Dendritic cell treated with granulocyte-macrophage colony-stimulating factor and Interleukin-4, amounts not matched to agents 40 ng/mL and 50 ng/mL, for 4 days (primary cell): ENCODE measurements at regions of chr15 and their contacts with region 1.

Region 1: DNA sequence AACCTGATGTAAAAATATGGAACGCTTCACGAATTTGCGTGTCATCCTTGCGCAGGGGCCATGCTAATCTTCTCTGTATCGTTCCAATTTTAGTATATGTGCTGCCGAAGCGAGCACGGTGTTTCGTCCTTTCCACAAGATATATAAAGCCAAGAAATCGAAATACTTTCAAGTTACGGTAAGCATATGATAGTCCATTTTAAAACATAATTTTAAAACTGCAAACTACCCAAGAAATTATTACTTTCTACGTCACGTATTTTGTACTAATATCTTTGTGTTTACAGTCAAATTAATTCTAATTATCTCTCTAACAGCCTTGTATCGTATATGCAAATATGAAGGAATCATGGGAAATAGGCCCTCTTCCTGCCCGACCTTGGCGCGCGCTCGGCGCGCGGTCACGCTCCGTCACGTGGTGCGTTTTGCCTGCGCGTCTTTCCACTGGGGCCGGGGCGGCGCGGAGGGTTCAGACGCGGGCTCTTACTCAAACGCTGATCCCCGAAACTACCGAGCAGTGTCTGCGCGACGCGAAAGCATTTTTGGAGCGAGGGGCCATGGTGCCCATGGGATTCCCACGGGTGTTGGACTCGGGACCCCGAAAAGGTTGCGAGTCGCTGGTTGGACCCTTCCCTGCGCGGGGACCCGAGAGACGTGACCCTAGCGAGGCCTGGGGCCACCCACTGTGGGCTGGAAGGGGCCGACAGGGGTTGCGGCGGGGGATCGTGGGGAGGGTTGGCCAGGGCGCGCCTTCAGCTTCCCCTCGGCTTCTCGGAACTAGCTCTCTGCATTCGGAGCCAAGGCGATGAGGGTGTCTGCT is at the start of gene RNU6-1:
- H3K4me3 Mint-ChIP-seq: peak within 1 kb of the TSS; percentile 75
- H3K27ac Mint-ChIP-seq: peak within 1 kb of the TSS; percentile 83
- H3K4me1 Mint-ChIP-seq: peaks cover 49% of the 10 kb centered on the region
- H3K27me3 Mint-ChIP-seq: peaks cover 17% of the 10 kb centered on the region

Region 2: GRCh38 chr15:67322481-67322880 is 517.7 kb before region 1 on chr15:
- intact Hi-C with region 1: no loop called
- H3K4me3 Mint-ChIP-seq: no peak overlapping the region
- H3K27ac Mint-ChIP-seq: no peak overlapping the region
- H3K4me1 Mint-ChIP-seq: no peaks in the 10 kb centered on the region
- H3K27me3 Mint-ChIP-seq: peaks cover 1% of the 10 kb centered on the region

Region 3: GRCh38 chr15:67383899-67384298 is 456.2 kb before region 1 on chr15:
- intact Hi-C with region 1: loop called (anchors 10 kb)
- H3K4me3 Mint-ChIP-seq: no peak overlapping the region
- H3K27ac Mint-ChIP-seq: no peak overlapping the region
- H3K4me1 Mint-ChIP-seq: no peaks in the 10 kb centered on the region
- H3K27me3 Mint-ChIP-seq: peaks cover 2% of the 10 kb centered on the region

Region 4: DNA sequence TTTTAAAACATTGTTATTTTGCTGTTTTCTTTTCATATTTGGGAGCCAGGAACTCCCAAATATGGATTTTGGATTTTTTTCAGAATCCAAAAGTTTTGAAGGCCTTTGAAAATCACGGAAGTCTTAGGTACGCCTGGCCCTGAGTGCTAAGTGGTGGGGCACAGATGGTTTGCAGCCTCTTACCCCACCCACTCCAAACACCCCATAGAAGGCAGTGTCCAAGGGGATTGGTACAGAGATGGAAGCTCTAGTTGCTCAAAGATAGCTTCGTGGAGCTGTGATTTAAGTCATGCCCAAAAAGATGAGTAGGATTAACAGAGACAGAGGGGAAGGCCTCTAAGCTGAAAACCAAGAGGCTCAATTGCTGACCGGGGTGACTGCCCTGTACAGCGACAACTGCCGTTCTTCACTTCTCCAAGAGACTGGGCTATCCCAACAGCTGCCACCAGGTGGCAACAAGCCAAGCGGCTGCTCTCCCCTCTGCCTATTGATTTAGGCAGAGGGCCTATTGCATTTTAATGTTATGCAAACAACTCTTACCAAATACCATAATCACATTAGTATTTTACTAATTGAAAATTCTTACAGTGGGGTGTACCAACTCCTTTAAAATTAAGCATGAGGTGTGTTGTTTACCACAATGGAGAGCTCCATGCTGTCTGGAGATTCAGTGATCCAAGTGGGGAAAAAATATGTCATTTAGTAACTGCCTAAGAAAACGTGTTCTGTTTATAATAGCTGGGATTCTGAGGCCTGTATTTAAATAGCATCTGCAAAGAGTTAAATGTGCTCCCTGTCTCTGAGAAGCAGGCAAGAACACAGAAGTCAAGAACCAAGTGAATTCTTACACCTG is 383.2 kb before region 1 on chr15:
- intact Hi-C with region 1: loop called (anchors 1 kb)
- H3K4me3 Mint-ChIP-seq: no peak overlapping the region
- H3K27ac Mint-ChIP-seq: no peak overlapping the region
- H3K4me1 Mint-ChIP-seq: no peaks in the 10 kb centered on the region
- H3K27me3 Mint-ChIP-seq: peaks cover 3% of the 10 kb centered on the region

Region 5: DNA sequence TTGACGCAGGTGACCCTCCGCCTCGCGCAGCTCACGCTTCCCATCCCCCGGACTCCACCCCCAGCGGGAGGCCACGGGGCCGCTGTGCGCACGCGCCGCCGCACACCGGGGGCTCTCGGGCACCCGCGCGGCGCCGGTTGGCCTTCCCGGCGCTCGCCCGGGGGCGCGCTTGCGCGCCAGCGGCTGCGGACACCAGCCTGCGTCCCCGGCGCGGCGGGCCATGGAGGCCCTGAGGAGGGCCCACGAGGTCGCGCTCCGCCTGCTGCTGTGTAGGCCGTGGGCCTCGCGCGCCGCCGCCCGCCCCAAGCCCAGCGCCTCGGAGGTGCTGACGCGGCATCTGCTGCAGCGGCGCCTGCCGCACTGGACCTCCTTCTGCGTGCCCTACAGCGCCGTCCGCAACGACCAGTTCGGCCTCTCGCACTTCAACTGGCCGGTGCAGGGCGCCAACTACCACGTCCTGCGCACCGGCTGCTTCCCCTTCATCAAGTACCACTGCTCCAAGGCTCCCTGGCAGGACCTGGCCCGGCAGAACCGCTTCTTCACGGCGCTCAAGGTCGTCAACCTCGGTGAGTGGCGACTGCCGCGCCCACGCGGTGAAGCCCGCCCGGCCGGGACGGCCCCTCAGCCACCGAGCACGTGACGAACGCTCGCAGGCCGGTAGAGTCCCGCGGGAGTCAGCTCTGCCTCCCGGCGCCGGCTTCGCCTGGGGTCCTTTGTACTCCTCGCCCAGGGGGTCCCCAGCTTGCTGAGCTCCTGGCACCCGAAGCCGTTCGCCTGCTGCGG is 318.9 kb before region 1 on chr15 and contains the start of gene C15orf61:
- intact Hi-C with region 1: loop called (anchors 5 kb)
- H3K4me3 Mint-ChIP-seq: peak within 1 kb of the TSS; percentile 86
- H3K27ac Mint-ChIP-seq: peak within 1 kb of the TSS; percentile 99
- H3K4me1 Mint-ChIP-seq: peaks cover 31% of the 10 kb centered on the region
- H3K27me3 Mint-ChIP-seq: no peaks in the 10 kb centered on the region

Region 6: GRCh38 chr15:67776600-67776999 is 63.5 kb before region 1 on chr15:
- intact Hi-C with region 1: no loop called
- H3K4me3 Mint-ChIP-seq: no peak overlapping the region
- H3K27ac Mint-ChIP-seq: no peak overlapping the region
- H3K4me1 Mint-ChIP-seq: peaks cover 31% of the 10 kb centered on the region
- H3K27me3 Mint-ChIP-seq: no peaks in the 10 kb centered on the region